GM12878 (cell line): ENCODE measurements at regions of chr15 and their contacts with region 1.

Region 1: GRCh38 chr15:67456677-67457529 is 64.0 kb upstream of the C15orf61 start:
- DNase-seq: peak; percentile 23
- ATAC-seq: peak; percentile 99
- H3K4me3 ChIP-seq: no peak overlapping the region
- H3K27ac ChIP-seq: no peak overlapping the region
- H3K4me1 ChIP-seq: no peaks in the 10 kb centered on the region
- H3K27me3 ChIP-seq: no peaks in the 10 kb centered on the region
- CTCF ChIP-seq: peak; percentile 94 to 96 (median 95); a peak in 5 of 6 replicates
- EP300 ChIP-seq: no peak
- POLR2A ChIP-seq: no peak
- RAD21 ChIP-seq: peak; percentile 86

Region 2: GRCh38 chr15:67240235-67241131 is 216.4 kb before region 1 on chr15:
- CTCF ChIA-PET with region 1: no interaction called
- POLR2A ChIA-PET with region 1: no interaction called
- RAD21 ChIA-PET with region 1: no interaction called
- SMC1A ChIA-PET with region 1: no interaction called
- in situ Hi-C with region 1: no loop called
- intact Hi-C with region 1: no loop called
- DNase-seq: peak; percentile 8
- ATAC-seq: peak; percentile 62
- H3K4me3 ChIP-seq: peak overlapping the region; percentile 50; the same call in 1 of the 2 replicates
- H3K27ac ChIP-seq: peak overlapping the region; percentile 59
- H3K4me1 ChIP-seq: peaks cover 30% of the 10 kb centered on the region
- H3K27me3 ChIP-seq: no peaks in the 10 kb centered on the region
- CTCF ChIP-seq: peak; percentile 25 to 46 (median 38); a peak in 5 of 6 replicates
- EP300 ChIP-seq: no peak
- POLR2A ChIP-seq: no peak
- RAD21 ChIP-seq: peak; percentile 45

Region 3: GRCh38 chr15:67383899-67384298 is 73.0 kb before region 1 on chr15:
- CTCF ChIA-PET with region 1: no interaction called
- POLR2A ChIA-PET with region 1: no interaction called
- RAD21 ChIA-PET with region 1: no interaction called
- SMC1A ChIA-PET with region 1: no interaction called
- in situ Hi-C with region 1: no loop called
- intact Hi-C with region 1: no loop called
- DNase-seq: no peak
- ATAC-seq: no peak
- H3K4me3 ChIP-seq: no peak overlapping the region
- H3K27ac ChIP-seq: no peak overlapping the region
- H3K4me1 ChIP-seq: no peaks in the 10 kb centered on the region
- H3K27me3 ChIP-seq: no peaks in the 10 kb centered on the region; a peak in 1 of 4 replicates
- CTCF ChIP-seq: no peak; a peak in 1 of 6 replicates
- EP300 ChIP-seq: no peak
- POLR2A ChIP-seq: no peak
- RAD21 ChIP-seq: 0 out of 2 replicates have a peak, but pooled peaks have one; percentile 8

Region 4: DNA sequence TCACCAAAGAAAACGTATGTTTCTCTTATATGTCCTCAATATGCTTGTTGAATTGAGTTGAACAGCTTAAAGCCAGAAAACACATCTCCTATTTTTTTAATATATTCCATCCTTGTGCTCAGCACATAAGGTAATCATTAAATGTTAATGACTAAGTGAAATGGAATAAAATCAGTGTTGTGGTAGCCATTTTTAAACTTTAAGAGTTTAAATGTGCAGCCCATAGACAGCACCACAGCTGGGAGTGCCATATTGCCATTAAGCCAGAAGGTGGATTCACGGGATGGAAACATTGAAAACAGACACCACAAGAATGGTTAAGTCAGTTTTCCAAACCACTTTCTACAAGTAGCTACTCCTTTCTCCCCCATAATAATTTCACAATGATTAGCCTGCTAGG is 12.8 kb before region 1 on chr15:
- CTCF ChIA-PET with region 1: interaction called, 23 read pairs
- POLR2A ChIA-PET with region 1: no interaction called
- RAD21 ChIA-PET with region 1: no interaction called
- SMC1A ChIA-PET with region 1: interaction called, 3 read pairs
- in situ Hi-C with region 1: no loop called
- intact Hi-C with region 1: no loop called
- DNase-seq: no peak
- ATAC-seq: no peak
- H3K4me3 ChIP-seq: no peak overlapping the region
- H3K27ac ChIP-seq: no peak overlapping the region
- H3K4me1 ChIP-seq: no peaks in the 10 kb centered on the region
- H3K27me3 ChIP-seq: no peaks in the 10 kb centered on the region
- CTCF ChIP-seq: no peak
- EP300 ChIP-seq: no peak
- POLR2A ChIP-seq: no peak
- RAD21 ChIP-seq: no peak

Region 5: GRCh38 chr15:67495585-67495984 is 38.7 kb after region 1 on chr15:
- CTCF ChIA-PET with region 1: interaction called, 13 read pairs
- POLR2A ChIA-PET with region 1: no interaction called
- RAD21 ChIA-PET with region 1: no interaction called
- SMC1A ChIA-PET with region 1: interaction called, 13 read pairs
- in situ Hi-C with region 1: no loop called
- intact Hi-C with region 1: no loop called
- DNase-seq: no peak
- ATAC-seq: peak; percentile 52
- H3K4me3 ChIP-seq: no peak overlapping the region
- H3K27ac ChIP-seq: no peak overlapping the region
- H3K4me1 ChIP-seq: 0 out of 2 replicates have a peak, but pooled peaks cover 3% of the 10 kb centered on the region
- H3K27me3 ChIP-seq: no peaks in the 10 kb centered on the region
- CTCF ChIP-seq: no peak
- EP300 ChIP-seq: no peak
- POLR2A ChIP-seq: no peak
- RAD21 ChIP-seq: no peak

Region 6: GRCh38 chr15:67833710-67834511 is 377.0 kb after region 1 on chr15:
- CTCF ChIA-PET with region 1: interaction called, 111 read pairs
- POLR2A ChIA-PET with region 1: interaction called, 3 read pairs
- RAD21 ChIA-PET with region 1: interaction called, 12 read pairs
- SMC1A ChIA-PET with region 1: interaction called, 51 read pairs
- in situ Hi-C with region 1: loop called (anchors 5 kb)
- intact Hi-C with region 1: loop called (anchors 1 kb)
- DNase-seq: no peak
- ATAC-seq: peak; percentile 71
- H3K4me3 ChIP-seq: peak overlapping the region; percentile 34; the same call in 1 of the 2 replicates
- H3K27ac ChIP-seq: no peak overlapping the region
- H3K4me1 ChIP-seq: peaks cover 19% of the 10 kb centered on the region
- H3K27me3 ChIP-seq: peaks cover 21 to 35% of the 10 kb centered on the region in 2 experiments
- CTCF ChIP-seq: peak; percentile 51 to 76 (median 76)
- EP300 ChIP-seq: no peak
- POLR2A ChIP-seq: no peak
- RAD21 ChIP-seq: peak; percentile 76